ENCODE measurements at regions of chr3 and their contacts with region 1.

Region 1: DNA sequence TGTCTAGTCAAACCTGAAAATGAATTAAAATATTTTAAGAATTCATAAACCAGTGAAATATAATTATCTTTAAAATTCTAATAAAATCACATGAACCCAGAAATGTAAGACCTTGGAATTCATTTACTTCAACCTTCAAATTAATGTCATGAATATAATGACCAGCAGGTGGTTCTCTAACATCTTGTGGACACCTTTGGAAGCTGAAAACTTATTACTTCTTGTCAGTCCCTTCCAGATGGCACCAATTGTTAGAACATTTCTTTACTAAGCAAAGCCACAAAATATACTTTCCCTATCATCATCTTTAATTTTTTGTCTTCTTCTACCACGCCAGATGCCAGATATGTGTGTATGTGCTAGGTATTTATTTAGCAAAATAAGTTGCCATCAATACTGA is 240.0 kb downstream of the MBNL1 start:
- DNase-seq: no peak
- H3K4me3 ChIP-seq: no peak overlapping the region
- H3K27ac ChIP-seq: no peak overlapping the region
- H3K4me1 ChIP-seq: no peaks in the 10 kb centered on the region
- H3K27me3 ChIP-seq: no peaks in the 10 kb centered on the region
- CTCF ChIP-seq: peak in 1 of 4 experiments; percentile 6
- EP300 ChIP-seq: no peak
- POLR2A ChIP-seq: no peak

Region 2: DNA sequence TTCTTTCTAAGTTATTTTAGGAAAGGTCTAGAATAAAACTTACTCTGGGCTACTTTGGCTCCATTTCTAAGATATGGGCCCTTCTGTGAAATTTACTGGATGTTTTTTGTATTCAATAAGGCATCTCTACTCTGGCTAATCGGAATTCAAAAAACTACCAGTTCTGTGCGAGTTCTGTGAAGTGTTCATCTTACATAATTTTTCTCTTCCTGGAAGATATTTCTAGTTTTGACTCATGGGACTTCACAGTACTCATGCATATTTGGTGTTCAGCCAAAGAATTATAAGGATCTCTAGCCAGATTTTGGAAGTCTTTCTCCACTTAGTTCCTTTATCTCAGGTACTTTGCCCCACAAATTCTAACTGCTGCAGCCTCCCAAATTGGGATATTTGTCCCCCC is 286.4 kb before region 1 on chr3:
- intact Hi-C with region 1: no loop called
- DNase-seq: no peak
- H3K4me3 ChIP-seq: no peak overlapping the region
- H3K27ac ChIP-seq: peak overlapping the region; percentile 59 to 85 (median 80)
- H3K4me1 ChIP-seq: peaks cover 0 to 79% (median 47%) of the 10 kb centered on the region in 4 donors
- H3K27me3 ChIP-seq: no peaks in the 10 kb centered on the region
- CTCF ChIP-seq: no peak
- EP300 ChIP-seq: no peak
- POLR2A ChIP-seq: no peak

Region 3: GRCh38 chr3:152365766-152366593 is 142.7 kb before region 1 on chr3:
- intact Hi-C with region 1: no loop called
- DNase-seq: no peak
- H3K4me3 ChIP-seq: no peak overlapping the region
- H3K27ac ChIP-seq: peak overlapping the region; percentile 36 to 57 (median 54)
- H3K4me1 ChIP-seq: peaks cover 0 to 89% (median 70%) of the 10 kb centered on the region in 4 donors
- H3K27me3 ChIP-seq: no peaks in the 10 kb centered on the region
- CTCF ChIP-seq: no peak
- EP300 ChIP-seq: no peak
- POLR2A ChIP-seq: no peak

Region 4: GRCh38 chr3:152574461-152575079 is 65.9 kb after region 1 on chr3:
- intact Hi-C with region 1: loop called (anchors 10 kb)
- DNase-seq: no peak
- H3K4me3 ChIP-seq: no peak overlapping the region
- H3K27ac ChIP-seq: no peak overlapping the region
- H3K4me1 ChIP-seq: no peaks in the 10 kb centered on the region
- H3K27me3 ChIP-seq: no peaks in the 10 kb centered on the region
- CTCF ChIP-seq: peak in 3 of 4 experiments; percentile 29 to 51 (median 34)
- EP300 ChIP-seq: no peak
- POLR2A ChIP-seq: no peak

Measured in sigmoid colon (tissue), 7 donors.